ENCODE measurements at regions of chr5 and their contacts with region 1.

Region 1: DNA sequence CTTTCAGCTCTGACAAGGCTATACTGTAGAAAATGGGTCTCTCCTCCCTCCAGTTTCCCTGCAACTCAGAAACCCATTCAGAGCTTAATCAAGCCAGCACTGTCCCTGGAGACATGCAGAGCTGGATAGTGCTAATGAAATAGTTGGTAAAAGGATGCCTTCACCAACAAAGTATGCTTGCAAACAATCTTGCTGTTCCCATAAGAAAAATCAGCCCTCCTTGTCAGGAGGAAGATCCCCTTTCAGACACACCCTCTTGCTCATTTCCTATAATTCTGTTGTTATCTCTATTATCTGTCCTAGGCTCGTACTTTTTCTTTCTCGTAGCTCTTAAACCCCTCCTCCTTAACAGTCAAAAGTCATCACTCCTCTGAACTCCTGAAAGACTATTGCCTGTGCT is 9.9 kb upstream of the OSMR start:
- DNase-seq: peak; percentile 33
- ATAC-seq: peak; percentile 72
- H3K4me3 ChIP-seq: no peak overlapping the region
- H3K27ac ChIP-seq: no peak overlapping the region
- H3K4me1 ChIP-seq: peaks cover 4% of the 10 kb centered on the region
- H3K27me3 ChIP-seq: no peaks in the 10 kb centered on the region
- CTCF ChIP-seq: no peak
- POLR2A ChIP-seq: no peak
- RAD21 ChIP-seq: no peak

Region 2: GRCh38 chr5:38591523-38591849 is 244.4 kb before region 1 on chr5:
- CTCF ChIA-PET with region 1: no interaction called
- POLR2A ChIA-PET with region 1: no interaction called
- dilution Hi-C with region 1: no loop called
- in situ Hi-C with region 1: no loop called
- intact Hi-C with region 1: no loop called
- DNase-seq: peak; percentile 30
- ATAC-seq: peak; percentile 50; the same call in 1 of the 2 replicates
- H3K4me3 ChIP-seq: no peak overlapping the region
- H3K27ac ChIP-seq: no peak overlapping the region
- H3K4me1 ChIP-seq: peaks cover 6% of the 10 kb centered on the region; the same call in 1 of the 2 replicates
- H3K27me3 ChIP-seq: peaks cover 2% of the 10 kb centered on the region; the same call in 1 of the 2 replicates
- CTCF ChIP-seq: no peak
- POLR2A ChIP-seq: no peak
- RAD21 ChIP-seq: no peak

Region 3: GRCh38 chr5:38922199-38922598 is 86.3 kb after region 1 on chr5:
- CTCF ChIA-PET with region 1: interaction called, 4 read pairs
- POLR2A ChIA-PET with region 1: no interaction called
- dilution Hi-C with region 1: no loop called
- in situ Hi-C with region 1: no loop called
- intact Hi-C with region 1: loop called (anchors 5 kb)
- DNase-seq: peak; percentile 51
- ATAC-seq: peak; percentile 43
- H3K4me3 ChIP-seq: no peak overlapping the region
- H3K27ac ChIP-seq: no peak overlapping the region
- H3K4me1 ChIP-seq: peaks cover 12% of the 10 kb centered on the region
- H3K27me3 ChIP-seq: no peaks in the 10 kb centered on the region
- CTCF ChIP-seq: peak; percentile 65
- POLR2A ChIP-seq: no peak
- RAD21 ChIP-seq: peak; percentile 77

Measured in IMR-90 (cell line).